HepG2 (cell line): ENCODE measurements at regions of chr17 and their contacts with region 1.

Region 1: GRCh38 chr17:40139566-40140058 is 725 bp upstream of the CASC3 start:
- DNase-seq: no peak
- ATAC-seq: peak; percentile 25
- H3K4me3 ChIP-seq: peak overlapping the region; percentile 61 to 93 (median 75)
- H3K27ac ChIP-seq: peak overlapping the region; percentile 93
- H3K4me1 ChIP-seq: peaks cover 37% of the 10 kb centered on the region
- H3K27me3 ChIP-seq: no peaks in the 10 kb centered on the region
- CTCF ChIP-seq: no peak
- EP300 ChIP-seq: no peak
- POLR2A ChIP-seq: no peak
- RAD21 ChIP-seq: no peak

Region 2: DNA sequence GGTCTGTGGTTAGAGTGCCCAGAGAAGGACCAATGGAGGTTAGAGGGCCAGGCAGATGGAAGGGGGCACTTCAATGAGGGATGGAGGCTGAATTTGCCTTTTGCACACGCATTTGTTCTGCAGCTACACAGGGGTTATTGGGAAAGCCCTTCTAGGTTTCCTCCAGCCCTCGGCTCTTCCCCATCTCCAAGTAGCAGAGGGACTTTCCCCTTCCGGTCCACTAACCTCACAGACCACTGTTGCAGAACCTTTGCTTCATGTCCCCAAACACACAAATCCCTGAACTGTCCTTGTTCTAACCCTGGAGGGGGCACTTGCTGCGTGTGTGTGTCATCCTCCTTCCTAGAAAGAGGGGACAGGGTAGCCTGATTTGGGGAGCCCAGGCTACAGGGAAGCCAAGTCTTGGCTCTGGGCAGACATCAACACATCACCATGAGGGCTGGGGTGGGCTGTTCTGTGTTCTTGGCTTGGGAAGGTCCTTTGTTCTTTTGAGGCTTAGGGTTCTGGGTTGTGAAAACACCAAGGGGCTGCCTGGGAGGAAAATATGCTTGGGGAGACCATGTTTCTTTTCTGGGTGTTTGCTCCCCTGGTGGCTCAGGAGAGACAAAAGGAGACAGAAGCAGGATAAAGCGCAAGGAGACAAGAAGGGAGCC is 32.0 kb before region 1 on chr17:
- CTCF ChIA-PET with region 1: no interaction called
- POLR2A ChIA-PET with region 1: interaction called, 142 read pairs
- in situ Hi-C with region 1: no loop called
- intact Hi-C with region 1: no loop called
- DNase-seq: peak; percentile 41
- ATAC-seq: no peak
- H3K4me3 ChIP-seq: peak overlapping the region; percentile 6 to 36 (median 13); a peak in 3 of 6 replicates
- H3K27ac ChIP-seq: peak overlapping the region; percentile 20
- H3K4me1 ChIP-seq: peaks cover 100% of the 10 kb centered on the region
- H3K27me3 ChIP-seq: peaks cover 0 to 9% of the 10 kb centered on the region in 2 experiments; a peak in 1 of 5 replicates
- CTCF ChIP-seq: no peak
- EP300 ChIP-seq: no peak
- POLR2A ChIP-seq: no peak
- RAD21 ChIP-seq: no peak

Region 3: DNA sequence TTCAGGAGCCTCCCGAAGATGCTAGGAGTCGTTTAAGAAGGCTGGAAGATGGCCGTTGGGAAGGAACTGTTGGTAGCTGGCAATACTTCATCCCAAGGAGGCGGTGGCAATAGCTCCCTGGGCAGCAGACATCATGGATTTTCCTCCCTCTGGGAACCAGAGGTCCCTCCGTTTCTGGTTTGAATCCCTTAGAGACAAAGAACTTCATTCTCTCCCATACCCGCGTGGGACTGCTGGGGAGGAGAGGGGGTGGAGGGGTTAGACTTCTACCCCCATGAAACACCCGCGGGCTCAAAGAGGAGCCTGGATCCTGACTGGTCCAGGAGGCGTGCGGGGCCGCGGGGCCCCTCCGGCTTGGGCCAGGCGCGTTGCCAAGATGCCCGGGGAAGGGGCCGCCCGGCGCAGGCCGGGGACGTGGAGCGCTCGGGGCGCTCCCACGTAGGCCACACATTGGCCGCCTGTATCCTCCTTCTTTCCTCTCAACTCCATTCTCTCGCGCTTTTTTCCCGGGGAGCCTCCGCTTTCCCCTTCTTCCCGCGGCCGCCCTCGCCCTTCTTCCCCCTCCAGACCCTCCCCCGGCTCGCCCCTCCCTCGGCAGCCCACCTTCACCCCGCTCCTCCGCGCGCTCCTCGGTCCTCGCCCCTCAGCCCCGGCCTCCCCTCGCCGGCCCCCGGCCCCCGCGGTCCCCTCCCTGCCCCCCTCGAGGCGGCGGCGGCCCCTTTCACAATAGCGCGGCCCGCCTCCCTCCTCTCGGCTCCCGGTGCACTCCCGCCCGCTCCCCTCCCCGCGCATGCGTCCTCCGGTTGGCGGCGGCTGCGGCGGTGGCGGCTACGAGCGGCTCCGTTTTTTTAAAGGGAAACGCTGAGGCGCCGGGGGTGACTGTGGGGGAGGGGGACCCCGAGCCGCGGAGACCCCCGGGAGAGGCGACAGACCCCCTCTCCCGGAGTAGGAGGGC is 18.2 kb before region 1 on chr17 and contains the start of gene MSL1:
- CTCF ChIA-PET with region 1: no interaction called
- POLR2A ChIA-PET with region 1: interaction called, 121 read pairs
- in situ Hi-C with region 1: no loop called
- intact Hi-C with region 1: no loop called
- DNase-seq: peak; percentile 70
- ATAC-seq: peak; percentile 70
- H3K4me3 ChIP-seq: peak within 1 kb of the TSS; percentile 91 to 98 (median 97)
- H3K27ac ChIP-seq: peak within 1 kb of the TSS; percentile 77
- H3K4me1 ChIP-seq: peaks cover 45% of the 10 kb centered on the region
- H3K27me3 ChIP-seq: no peaks in the 10 kb centered on the region; a peak in 1 of 5 replicates
- CTCF ChIP-seq: no peak
- EP300 ChIP-seq: no peak
- POLR2A ChIP-seq: peak in 1 of 2 experiments; percentile 54
- RAD21 ChIP-seq: peak; percentile 49; the same call in 1 of the 2 replicates
- total RNA-seq, gene MSL1: 76.1 and 88.5 TPM in 2 replicates

Region 4: GRCh38 chr17:40151414-40151963 is 11.9 kb after region 1 on chr17:
- CTCF ChIA-PET with region 1: no interaction called
- POLR2A ChIA-PET with region 1: interaction called, 12 read pairs
- in situ Hi-C with region 1: no loop called
- intact Hi-C with region 1: no loop called
- DNase-seq: no peak
- ATAC-seq: no peak
- H3K4me3 ChIP-seq: no peak overlapping the region
- H3K27ac ChIP-seq: no peak overlapping the region
- H3K4me1 ChIP-seq: peaks cover 24% of the 10 kb centered on the region
- H3K27me3 ChIP-seq: no peaks in the 10 kb centered on the region
- CTCF ChIP-seq: no peak
- EP300 ChIP-seq: no peak
- POLR2A ChIP-seq: no peak
- RAD21 ChIP-seq: no peak

Region 5: GRCh38 chr17:40287494-40288369 is 148.1 kb after region 1 on chr17 and contains the start of gene CDC6:
- CTCF ChIA-PET with region 1: no interaction called
- POLR2A ChIA-PET with region 1: interaction called, 4 read pairs
- in situ Hi-C with region 1: no loop called
- intact Hi-C with region 1: loop called (anchors 5 kb)
- DNase-seq: peak; percentile 100
- ATAC-seq: peak; percentile 95
- H3K4me3 ChIP-seq: peak within 1 kb of the TSS; percentile 81 to 99 (median 92)
- H3K27ac ChIP-seq: peak within 1 kb of the TSS; percentile 92
- H3K4me1 ChIP-seq: peaks cover 72% of the 10 kb centered on the region
- H3K27me3 ChIP-seq: no peaks in the 10 kb centered on the region
- CTCF ChIP-seq: peak; percentile 5; the same call in 1 of the 2 replicates
- EP300 ChIP-seq: peak; percentile 5 to 16; a peak in 1 of 4 replicates
- POLR2A ChIP-seq: peak; percentile 89 to 98
- RAD21 ChIP-seq: no peak
- total RNA-seq, gene CDC6: 114 and 154 TPM in 2 replicates

Region 6: GRCh38 chr17:40422990-40423616 is 283.5 kb after region 1 on chr17:
- CTCF ChIA-PET with region 1: no interaction called
- POLR2A ChIA-PET with region 1: no interaction called
- in situ Hi-C with region 1: no loop called
- intact Hi-C with region 1: no loop called
- DNase-seq: no peak
- ATAC-seq: no peak; the same call in 2 of the 3 replicates
- H3K4me3 ChIP-seq: no peak overlapping the region
- H3K27ac ChIP-seq: no peak overlapping the region
- H3K4me1 ChIP-seq: peaks cover 57% of the 10 kb centered on the region
- H3K27me3 ChIP-seq: peaks cover 0 to 4% of the 10 kb centered on the region in 2 experiments; a peak in 1 of 5 replicates
- CTCF ChIP-seq: peak; percentile 34; the same call in 1 of the 2 replicates
- EP300 ChIP-seq: no peak
- POLR2A ChIP-seq: no peak
- RAD21 ChIP-seq: no peak